ENCODE measurements at regions of chr15 and their contacts with region 1.

Region 1: DNA sequence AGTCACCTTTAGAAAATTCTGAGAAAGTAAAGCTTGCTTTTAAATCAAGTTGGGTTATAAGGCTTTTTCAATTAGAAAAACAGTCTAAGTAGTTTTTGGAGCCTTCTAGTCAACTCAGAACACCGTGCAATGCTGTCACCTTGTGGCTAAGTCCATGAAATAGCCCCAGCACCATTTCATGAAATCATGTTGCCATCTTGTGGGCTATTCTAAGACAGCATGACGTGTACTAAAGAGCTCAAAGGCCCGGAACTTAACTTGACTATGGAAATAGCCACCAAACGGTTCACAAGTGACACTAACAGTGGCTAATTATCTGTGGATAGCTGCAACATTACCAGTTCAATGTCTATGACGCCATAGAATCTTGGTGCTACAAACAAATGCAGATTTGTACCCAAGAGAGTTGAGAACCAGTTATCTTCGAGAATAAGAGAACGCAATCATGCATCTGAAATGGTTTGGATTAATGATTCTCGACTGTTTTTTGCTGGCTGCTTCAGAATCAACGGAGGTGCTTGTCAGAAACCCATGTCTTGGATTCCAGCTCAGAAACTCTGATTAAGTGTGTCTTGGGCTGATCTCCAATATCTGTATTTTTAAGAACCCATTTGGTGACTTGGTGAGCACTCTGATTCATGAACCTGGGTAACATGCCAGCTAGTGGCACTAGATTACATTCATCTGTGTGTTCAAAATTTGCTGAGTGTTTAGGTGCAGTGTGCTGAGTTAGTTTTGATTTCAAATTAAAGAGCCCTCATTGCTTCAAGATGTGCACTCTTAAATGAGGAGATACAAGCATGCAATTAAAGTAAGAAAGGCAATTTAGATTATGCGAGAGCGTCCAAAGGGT is 111.2 kb upstream of the MCTP2 start:
- DNase-seq: peak in 4 of 5 donors; percentile 43 to 65 (median 54)
- ATAC-seq: peak; percentile 90 to 98 (median 96)
- H3K4me3 ChIP-seq: no peak overlapping the region
- H3K27ac ChIP-seq: peak overlapping the region in 11 of 12 donors; percentile 20 to 72 (median 60)
- H3K4me1 ChIP-seq: peaks cover 0 to 7% (median 0%) of the 10 kb centered on the region in 12 donors
- H3K27me3 ChIP-seq: no peaks in the 10 kb centered on the region
- CTCF ChIP-seq: peak; percentile 65 to 94 (median 86)
- POLR2A ChIP-seq: no peak

Region 2: DNA sequence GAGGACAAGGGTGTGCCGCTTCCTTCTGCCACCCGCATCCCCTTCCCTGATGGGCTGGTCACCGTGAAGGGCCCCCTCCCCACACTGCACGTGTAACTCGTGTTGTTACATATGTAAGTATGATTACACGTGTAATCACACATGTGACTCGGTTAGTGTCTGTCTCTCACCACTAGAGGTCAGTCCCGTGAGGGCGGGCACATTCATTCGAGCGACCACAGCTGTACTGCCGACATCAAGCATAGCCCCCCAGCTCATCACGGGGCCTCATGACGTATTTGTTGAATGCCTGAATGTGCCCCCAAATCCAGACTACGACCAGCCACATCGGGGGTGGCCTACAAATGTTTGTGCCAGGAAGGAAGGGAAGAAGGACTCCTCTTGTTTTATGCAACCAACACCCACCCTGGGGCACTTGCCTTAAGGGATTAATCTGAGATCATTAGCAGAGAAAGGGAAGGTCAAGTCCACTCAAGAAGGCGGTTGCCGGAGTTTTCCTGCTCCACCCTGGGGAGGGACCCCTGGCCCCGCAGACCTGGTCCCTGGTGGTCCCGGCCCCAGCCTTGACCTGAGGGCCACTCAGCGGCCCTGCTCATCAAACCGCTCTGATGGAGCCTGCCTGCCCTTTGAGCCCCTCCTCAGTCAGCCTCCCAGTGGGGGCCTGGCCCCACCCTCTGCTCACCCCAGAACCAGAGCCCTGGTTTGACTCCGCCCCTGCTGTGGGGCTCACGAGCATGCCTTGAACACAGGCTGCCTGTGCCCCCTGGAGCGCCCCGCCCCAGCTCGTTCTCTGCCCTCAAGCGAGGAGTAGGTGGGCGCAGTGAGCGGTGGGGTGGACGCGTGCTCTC is 1084.0 kb before region 1 on chr15:
- intact Hi-C with region 1: loop called in 8 of 10 experiments (anchors 2 to 5 kb)
- DNase-seq: peak in 3 of 5 donors; percentile 19 to 54 (median 43)
- ATAC-seq: peak in 3 of 4 donors; percentile 9 to 44 (median 32)
- H3K4me3 ChIP-seq: no peak overlapping the region
- H3K27ac ChIP-seq: no peak overlapping the region
- H3K4me1 ChIP-seq: peaks cover 0 to 27% (median 3%) of the 10 kb centered on the region in 12 donors
- H3K27me3 ChIP-seq: no peaks in the 10 kb centered on the region
- CTCF ChIP-seq: peak; percentile 31 to 68 (median 51)
- POLR2A ChIP-seq: no peak

Region 3: GRCh38 chr15:93141371-93141794 is 978.8 kb before region 1 on chr15:
- intact Hi-C with region 1: loop called in 1 of 10 experiments (anchors 10 kb)
- DNase-seq: no peak
- ATAC-seq: no peak
- H3K4me3 ChIP-seq: no peak overlapping the region
- H3K27ac ChIP-seq: no peak overlapping the region
- H3K4me1 ChIP-seq: peaks cover 0 to 3% (median 0%) of the 10 kb centered on the region in 12 donors
- H3K27me3 ChIP-seq: no peaks in the 10 kb centered on the region
- CTCF ChIP-seq: no peak
- POLR2A ChIP-seq: no peak

Region 4: GRCh38 chr15:93997084-93997918 is 122.8 kb before region 1 on chr15:
- intact Hi-C with region 1: loop called in 3 of 10 experiments (anchors 5 to 10 kb)
- DNase-seq: no peak
- ATAC-seq: no peak
- H3K4me3 ChIP-seq: no peak overlapping the region
- H3K27ac ChIP-seq: no peak overlapping the region
- H3K4me1 ChIP-seq: peaks cover 0 to 12% (median 0%) of the 10 kb centered on the region in 12 donors
- H3K27me3 ChIP-seq: no peaks in the 10 kb centered on the region
- CTCF ChIP-seq: peak; percentile 38 to 75 (median 56)
- POLR2A ChIP-seq: no peak

Region 5: DNA sequence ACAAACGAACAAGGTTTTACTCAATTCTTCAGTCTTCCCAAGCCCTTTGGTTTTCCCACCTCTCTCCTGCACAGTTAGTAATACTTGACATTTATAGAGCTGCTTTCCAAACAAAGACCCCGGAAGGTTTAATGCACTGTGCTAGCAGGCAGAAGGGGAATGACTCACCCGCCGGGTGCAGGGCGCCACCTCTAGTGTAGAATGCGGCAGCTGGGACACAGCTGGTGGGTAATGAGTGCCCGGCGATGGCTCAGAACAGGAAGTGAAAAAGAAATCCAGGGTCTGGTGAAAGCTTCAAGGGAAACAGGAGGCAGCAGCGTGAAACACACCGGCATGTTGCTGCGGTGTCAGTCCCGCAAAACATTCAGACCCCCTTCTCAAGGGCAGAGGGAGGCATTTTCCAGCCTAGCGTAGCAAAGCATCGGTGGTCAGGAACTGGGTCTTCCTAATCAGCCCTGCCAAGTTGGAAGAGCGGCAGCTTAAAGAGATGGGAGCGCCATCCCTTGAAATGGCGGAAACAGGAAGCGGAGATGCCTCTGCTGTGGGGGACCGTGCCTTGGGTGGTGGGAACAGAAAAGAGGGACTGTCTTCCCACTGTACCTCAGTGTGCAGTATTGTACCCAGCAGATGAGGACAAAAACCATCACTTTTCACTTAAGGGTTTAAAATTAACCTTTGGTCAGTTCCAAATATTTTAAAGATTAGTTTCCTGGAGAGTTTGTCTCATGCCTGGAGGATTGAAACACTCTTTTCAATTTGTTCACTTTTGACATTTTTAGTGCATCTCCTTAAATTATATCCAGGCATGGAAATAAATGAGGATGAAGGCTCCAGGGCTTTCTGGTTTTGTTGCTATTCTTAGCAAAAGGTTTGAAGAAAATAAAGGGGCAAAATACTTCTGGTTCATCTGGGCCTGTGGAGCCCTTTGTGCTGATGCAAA is 49.5 kb before region 1 on chr15:
- intact Hi-C with region 1: no loop called
- DNase-seq: peak in 1 of 5 donors; percentile 26
- ATAC-seq: no peak
- H3K4me3 ChIP-seq: no peak overlapping the region
- H3K27ac ChIP-seq: peak overlapping the region in 1 of 12 donors; percentile 60
- H3K4me1 ChIP-seq: peaks cover 0 to 7% (median 0%) of the 10 kb centered on the region in 12 donors
- H3K27me3 ChIP-seq: no peaks in the 10 kb centered on the region
- CTCF ChIP-seq: no peak
- POLR2A ChIP-seq: no peak

Region 6: DNA sequence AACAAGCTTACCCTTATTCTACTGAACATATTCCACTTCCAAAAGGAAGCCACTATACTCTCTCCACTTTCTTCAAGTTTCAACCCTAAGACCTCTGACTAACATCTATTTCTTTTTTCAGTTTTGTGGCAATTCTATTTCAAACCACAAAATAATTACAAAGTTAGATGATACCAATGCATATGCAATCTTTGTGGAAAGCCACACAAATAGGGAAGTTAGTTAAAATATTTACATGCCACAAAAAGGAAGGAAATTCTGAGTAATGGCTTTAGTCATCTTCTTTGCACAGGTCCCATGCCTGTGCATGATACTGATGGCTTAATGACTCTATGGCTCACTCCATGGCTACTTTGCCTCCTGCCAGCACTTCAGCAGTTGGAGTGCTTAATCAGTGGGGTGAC is 54.3 kb after region 1 on chr15:
- intact Hi-C with region 1: no loop called
- DNase-seq: peak in 1 of 5 donors; percentile 20
- ATAC-seq: peak in 3 of 4 donors; percentile 26 to 72 (median 50)
- H3K4me3 ChIP-seq: no peak overlapping the region
- H3K27ac ChIP-seq: peak overlapping the region in 1 of 12 donors; percentile 32
- H3K4me1 ChIP-seq: peaks cover 0 to 17% (median 0%) of the 10 kb centered on the region in 12 donors
- H3K27me3 ChIP-seq: peaks cover 0 to 7% (median 0%) of the 10 kb centered on the region in 9 donors
- CTCF ChIP-seq: no peak
- POLR2A ChIP-seq: no peak

Region 7: GRCh38 chr15:94412979-94413746 is 293.0 kb after region 1 on chr15:
- intact Hi-C with region 1: no loop called
- DNase-seq: no peak
- ATAC-seq: no peak
- H3K4me3 ChIP-seq: no peak overlapping the region
- H3K27ac ChIP-seq: no peak overlapping the region
- H3K4me1 ChIP-seq: peaks cover 0 to 6% (median 0%) of the 10 kb centered on the region in 12 donors
- H3K27me3 ChIP-seq: peaks cover 0 to 17% (median 0%) of the 10 kb centered on the region in 9 donors
- CTCF ChIP-seq: peak in 11 of 12 donors; percentile 24 to 58 (median 34)
- POLR2A ChIP-seq: no peak